ENCODE measurements at regions of chr6 and their contacts with region 1.

Region 1: GRCh38 chr6:31114970-31115849 is 610 bp downstream of the PSORS1C1 start:
- DNase-seq: no peak
- H3K4me3 ChIP-seq: peak overlapping the region; percentile 41
- H3K27ac ChIP-seq: peak overlapping the region; percentile 77
- H3K27me3 ChIP-seq: peaks cover 10% of the 10 kb centered on the region
- CTCF ChIP-seq: 0 out of 2 replicates have a peak, but pooled peaks have one; percentile 24

Region 2: GRCh38 chr6:31139599-31139998 is 24.4 kb after region 1 on chr6:
- CTCF ChIA-PET with region 1: interaction called, 10 read pairs
- POLR2A ChIA-PET with region 1: no interaction called
- DNase-seq: no peak
- H3K4me3 ChIP-seq: no peak overlapping the region
- H3K27ac ChIP-seq: no peak overlapping the region
- H3K27me3 ChIP-seq: no peaks in the 10 kb centered on the region
- CTCF ChIP-seq: no peak

Region 3: GRCh38 chr6:31180502-31180901 is 65.3 kb after region 1 on chr6:
- CTCF ChIA-PET with region 1: no interaction called
- POLR2A ChIA-PET with region 1: no interaction called
- DNase-seq: no peak
- H3K4me3 ChIP-seq: peak overlapping the region; percentile 20
- H3K27ac ChIP-seq: no peak overlapping the region
- H3K27me3 ChIP-seq: no peaks in the 10 kb centered on the region
- CTCF ChIP-seq: no peak